ENCODE measurements at regions of chr13 and their contacts with region 1.

Region 1: GRCh38 chr13:73708393-73708985 is 425.7 kb downstream of the KLF12 start:
- DNase-seq: no peak
- ATAC-seq: peak; percentile 94
- H3K4me3 ChIP-seq: no peak overlapping the region
- H3K27ac ChIP-seq: no peak overlapping the region
- H3K4me1 ChIP-seq: no peaks in the 10 kb centered on the region
- H3K27me3 ChIP-seq: no peaks in the 10 kb centered on the region
- CTCF ChIP-seq: peak; percentile 69 to 88 (median 79)
- EP300 ChIP-seq: no peak
- POLR2A ChIP-seq: no peak
- RAD21 ChIP-seq: peak; percentile 97

Region 2: DNA sequence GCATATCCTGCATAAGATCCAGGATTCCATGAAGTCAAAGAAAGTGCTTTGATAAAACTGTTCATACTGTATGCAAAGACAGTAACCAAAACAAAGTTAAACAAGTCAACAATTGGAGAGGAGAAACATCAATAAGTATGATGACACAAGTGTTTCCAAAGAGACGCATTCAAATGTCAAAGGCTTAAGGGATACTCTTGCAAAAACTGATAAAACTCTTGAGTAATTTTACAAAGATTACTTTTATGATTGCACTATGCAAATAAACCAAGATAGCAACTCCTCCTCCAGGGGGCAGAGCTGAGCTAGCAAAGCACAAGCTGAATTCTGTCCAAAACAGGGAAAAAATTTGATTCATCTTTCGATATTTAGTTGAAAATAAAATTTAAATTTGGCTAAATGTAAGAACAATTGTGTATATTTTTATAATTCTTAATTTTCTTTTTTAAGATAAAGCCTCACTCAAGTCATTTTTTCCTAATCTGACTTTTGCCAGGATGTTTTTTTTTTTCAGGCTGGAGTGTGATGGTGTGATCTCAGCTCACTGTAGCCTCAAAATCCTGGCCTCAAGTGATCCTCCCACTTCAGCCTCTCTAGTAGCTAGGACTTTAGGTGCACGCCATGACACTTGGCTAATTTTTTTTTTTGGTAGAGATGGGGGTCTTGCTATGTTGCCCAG is 1065.0 kb before region 1 on chr13:
- CTCF ChIA-PET with region 1: no interaction called
- POLR2A ChIA-PET with region 1: no interaction called
- RAD21 ChIA-PET with region 1: no interaction called
- SMC1A ChIA-PET with region 1: no interaction called
- in situ Hi-C with region 1: no loop called
- intact Hi-C with region 1: loop called (anchors 2 kb)
- DNase-seq: no peak
- ATAC-seq: peak; percentile 75
- H3K4me3 ChIP-seq: no peak overlapping the region
- H3K27ac ChIP-seq: no peak overlapping the region
- H3K4me1 ChIP-seq: no peaks in the 10 kb centered on the region
- H3K27me3 ChIP-seq: no peaks in the 10 kb centered on the region
- CTCF ChIP-seq: peak; percentile 60 to 76 (median 72)
- EP300 ChIP-seq: no peak
- POLR2A ChIP-seq: no peak
- RAD21 ChIP-seq: peak; percentile 71

Region 3: DNA sequence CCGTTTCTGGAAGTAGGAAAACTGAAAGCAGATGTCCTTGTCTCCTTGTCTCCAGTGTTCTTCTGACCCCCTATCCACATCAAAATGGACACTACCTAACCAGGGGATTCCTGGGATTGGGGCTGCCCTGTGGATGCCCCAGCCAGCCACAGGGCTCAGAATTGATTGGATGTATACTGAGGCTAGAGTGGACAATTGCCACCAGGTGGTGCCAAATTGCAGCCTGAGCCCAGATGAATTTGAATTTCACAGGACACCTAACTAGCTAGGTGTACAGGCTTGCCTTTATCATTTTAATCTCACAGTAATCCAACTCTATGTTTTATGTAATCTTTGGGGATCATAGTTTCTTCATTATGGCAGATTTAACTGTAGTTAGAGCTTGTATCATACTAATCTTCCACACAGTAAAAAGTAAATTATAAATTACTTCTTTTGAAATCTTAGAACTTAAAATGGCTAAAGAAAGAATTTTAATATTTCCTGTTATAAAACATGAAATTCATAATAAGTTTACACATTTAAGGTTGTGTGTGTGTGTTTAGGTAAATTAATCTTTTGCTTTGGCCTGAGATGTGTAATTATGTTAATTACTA is 868.6 kb before region 1 on chr13:
- CTCF ChIA-PET with region 1: interaction called, 7 read pairs
- POLR2A ChIA-PET with region 1: no interaction called
- RAD21 ChIA-PET with region 1: interaction called, 5 read pairs
- SMC1A ChIA-PET with region 1: interaction called, 6 read pairs
- in situ Hi-C with region 1: no loop called
- intact Hi-C with region 1: loop called (anchors 1 kb)
- DNase-seq: peak; percentile 3
- ATAC-seq: peak; percentile 99
- H3K4me3 ChIP-seq: no peak overlapping the region
- H3K27ac ChIP-seq: no peak overlapping the region
- H3K4me1 ChIP-seq: no peaks in the 10 kb centered on the region
- H3K27me3 ChIP-seq: no peaks in the 10 kb centered on the region
- CTCF ChIP-seq: peak; percentile 77 to 78 (median 78)
- EP300 ChIP-seq: no peak
- POLR2A ChIP-seq: no peak
- RAD21 ChIP-seq: peak; percentile 92

Region 4: GRCh38 chr13:73228546-73228945 is 479.9 kb before region 1 on chr13:
- CTCF ChIA-PET with region 1: no interaction called
- POLR2A ChIA-PET with region 1: no interaction called
- RAD21 ChIA-PET with region 1: no interaction called
- SMC1A ChIA-PET with region 1: no interaction called
- in situ Hi-C with region 1: no loop called
- intact Hi-C with region 1: loop called (anchors 10 kb)
- DNase-seq: no peak
- ATAC-seq: no peak
- H3K4me3 ChIP-seq: no peak overlapping the region
- H3K27ac ChIP-seq: no peak overlapping the region
- H3K4me1 ChIP-seq: no peaks in the 10 kb centered on the region; the same call in 1 of the 2 replicates
- H3K27me3 ChIP-seq: no peaks in the 10 kb centered on the region
- CTCF ChIP-seq: no peak
- EP300 ChIP-seq: no peak
- POLR2A ChIP-seq: no peak
- RAD21 ChIP-seq: no peak